Dorsolateral prefrontal cortex (tissue), 120 donors: ENCODE measurements at regions of chr1 and their contacts with region 1.

Region 1: DNA sequence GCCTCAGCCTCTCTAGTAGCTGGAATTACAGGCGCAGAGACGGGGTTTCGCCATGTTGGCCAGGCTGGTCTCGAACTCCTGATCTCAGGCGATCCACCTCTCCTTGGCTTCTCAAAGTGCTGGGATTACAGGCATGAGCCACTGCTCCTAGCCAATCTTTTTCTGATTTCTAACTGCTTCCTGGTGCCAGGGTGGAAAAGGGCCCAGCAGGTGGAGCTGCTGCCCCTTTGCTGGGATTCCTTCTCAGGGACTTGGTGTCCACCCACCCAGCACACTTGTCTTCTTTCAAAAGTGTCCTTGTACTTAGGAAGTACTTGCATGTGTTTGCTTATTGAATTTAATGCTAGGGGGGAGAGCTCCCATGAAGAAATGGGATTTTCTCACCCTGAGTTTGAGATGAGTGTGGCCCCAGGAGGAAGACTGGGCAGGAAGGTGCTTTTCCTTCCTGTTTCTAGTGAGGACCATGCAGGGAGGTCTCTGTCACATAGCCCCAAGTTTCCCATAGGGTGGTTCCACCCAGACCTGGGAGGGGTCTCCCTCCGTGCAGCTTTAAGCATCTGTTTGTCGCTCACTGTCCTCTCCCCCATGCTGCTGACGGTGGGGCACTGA is 14.2 kb downstream of the UTP11 start:
- DNase-seq: peak in 6 of 10 donors; percentile 53 to 81 (median 78)
- H3K4me3 ChIP-seq: no peak overlapping the region
- H3K27ac ChIP-seq: no peak overlapping the region
- H3K27me3 ChIP-seq: no peaks in the 10 kb centered on the region
- CTCF ChIP-seq: peak in 55 of 56 donors; percentile 35 to 82 (median 69)

Region 2: DNA sequence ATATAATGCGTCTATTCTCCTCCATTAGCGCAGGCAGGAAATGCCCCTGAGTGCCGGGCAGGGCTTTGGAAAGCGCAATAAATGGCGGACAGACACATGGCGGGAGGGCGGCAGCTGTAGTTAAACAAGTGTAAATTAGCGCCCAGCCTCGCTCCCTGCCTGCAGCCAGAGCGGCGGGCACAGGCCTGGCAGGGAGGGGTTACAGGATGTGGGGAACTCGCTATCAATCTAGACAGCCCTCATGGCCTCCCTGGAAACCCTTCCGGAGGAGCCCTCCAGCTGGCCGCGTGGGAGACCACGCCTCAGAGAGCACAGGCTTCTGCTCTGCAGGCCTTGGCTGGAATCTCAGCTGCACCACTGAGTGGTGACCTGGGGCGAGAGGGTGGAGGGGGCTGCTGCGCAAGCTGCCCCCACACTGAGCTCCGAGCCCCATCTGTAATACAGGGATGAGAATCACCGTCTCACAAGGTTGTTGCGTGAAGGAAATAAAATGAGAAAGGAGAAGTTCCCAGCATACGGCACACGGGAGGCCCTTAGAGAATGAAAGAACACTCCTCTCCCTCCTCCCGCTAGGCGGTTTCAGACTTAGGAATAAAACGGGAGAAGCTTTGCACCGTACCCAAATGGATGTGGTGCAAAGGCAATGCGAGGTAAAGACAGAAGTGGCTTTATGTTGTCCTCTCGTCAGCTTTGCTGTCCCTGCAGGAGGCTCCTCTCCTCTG is 187.1 kb after region 1 on chr1:
- intact Hi-C with region 1: no loop called
- DNase-seq: no peak
- H3K4me3 ChIP-seq: peak overlapping the region in 1 of 59 donors; percentile 2
- H3K27ac ChIP-seq: no peak overlapping the region
- H3K27me3 ChIP-seq: peaks cover 0 to 2% (median 0%) of the 10 kb centered on the region in 45 donors
- CTCF ChIP-seq: no peak

Region 3: GRCh38 chr1:38818175-38818976 is 791.7 kb after region 1 on chr1:
- intact Hi-C with region 1: loop called (anchors 5 to 10 kb)
- DNase-seq: peak in 1 of 10 donors; percentile 53
- H3K4me3 ChIP-seq: peak overlapping the region in 58 of 59 donors; percentile 8 to 61 (median 42)
- H3K27ac ChIP-seq: no peak overlapping the region
- H3K27me3 ChIP-seq: peaks cover 0 to 42% (median 14%) of the 10 kb centered on the region in 45 donors
- CTCF ChIP-seq: peak; percentile 43 to 95 (median 78)

Region 4: DNA sequence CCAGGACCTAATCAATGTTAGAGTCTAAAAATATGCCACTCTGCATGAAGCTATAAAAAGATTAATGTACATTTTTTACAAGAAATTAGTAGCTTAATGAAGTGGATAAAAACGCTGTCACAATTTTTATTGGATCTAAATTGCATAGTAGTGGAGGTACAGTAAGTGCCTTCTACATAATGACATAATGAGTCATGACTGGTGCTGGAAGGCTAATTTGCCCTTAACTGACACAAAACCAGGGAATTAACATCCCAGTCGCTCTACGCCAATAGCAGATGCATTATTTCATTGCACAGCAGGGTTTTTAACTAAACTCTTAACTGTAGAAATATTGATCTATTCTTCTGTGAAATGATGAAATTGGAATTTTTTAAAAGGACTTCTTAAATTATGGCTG is 799.6 kb after region 1 on chr1:
- intact Hi-C with region 1: loop called in 1 of 2 experiments (anchors 10 kb)
- DNase-seq: no peak
- H3K4me3 ChIP-seq: no peak overlapping the region
- H3K27ac ChIP-seq: no peak overlapping the region
- H3K27me3 ChIP-seq: peaks cover 0 to 6% (median 0%) of the 10 kb centered on the region in 45 donors
- CTCF ChIP-seq: no peak

Region 5: GRCh38 chr1:38834937-38835827 is 808.5 kb after region 1 on chr1:
- intact Hi-C with region 1: loop called in 1 of 2 experiments (anchors 5 kb)
- DNase-seq: peak in 2 of 10 donors; percentile 41 to 51
- H3K4me3 ChIP-seq: no peak overlapping the region
- H3K27ac ChIP-seq: no peak overlapping the region
- H3K27me3 ChIP-seq: peaks cover 0 to 6% (median 0%) of the 10 kb centered on the region in 45 donors
- CTCF ChIP-seq: peak; percentile 72 to 96 (median 88)